Testis (tissue), 5 donors: ENCODE measurements at regions of chr5 and their contacts with region 1.

Region 1: GRCh38 chr5:39217365-39218281 is 1.7 kb downstream of the FYB1 start:
- DNase-seq: peak; percentile 91
- H3K4me3 ChIP-seq: no peak overlapping the region
- H3K27ac ChIP-seq: no peak overlapping the region
- H3K4me1 ChIP-seq: no peaks in the 10 kb centered on the region
- H3K27me3 ChIP-seq: no peaks in the 10 kb centered on the region
- CTCF ChIP-seq: peak; percentile 82 to 95 (median 85)
- POLR2A ChIP-seq: no peak

Region 2: GRCh38 chr5:39558541-39558940 is 340.9 kb after region 1 on chr5:
- intact Hi-C with region 1: no loop called
- DNase-seq: no peak
- H3K4me3 ChIP-seq: no peak overlapping the region
- H3K27ac ChIP-seq: no peak overlapping the region
- H3K4me1 ChIP-seq: no peaks in the 10 kb centered on the region
- H3K27me3 ChIP-seq: no peaks in the 10 kb centered on the region
- CTCF ChIP-seq: no peak
- POLR2A ChIP-seq: no peak

Region 3: GRCh38 chr5:39570403-39571027 is 352.9 kb after region 1 on chr5:
- intact Hi-C with region 1: loop called (anchors 10 kb)
- DNase-seq: no peak
- H3K4me3 ChIP-seq: no peak overlapping the region
- H3K27ac ChIP-seq: no peak overlapping the region
- H3K4me1 ChIP-seq: no peaks in the 10 kb centered on the region
- H3K27me3 ChIP-seq: no peaks in the 10 kb centered on the region
- CTCF ChIP-seq: peak; percentile 61 to 68 (median 63)
- POLR2A ChIP-seq: no peak

Region 4: GRCh38 chr5:39639609-39640078 is 422.0 kb after region 1 on chr5:
- intact Hi-C with region 1: no loop called
- DNase-seq: no peak
- H3K4me3 ChIP-seq: no peak overlapping the region
- H3K27ac ChIP-seq: no peak overlapping the region
- H3K4me1 ChIP-seq: no peaks in the 10 kb centered on the region
- H3K27me3 ChIP-seq: no peaks in the 10 kb centered on the region
- CTCF ChIP-seq: no peak
- POLR2A ChIP-seq: no peak